Activated naive CD4-positive, alpha-beta T cell treated with anti-CD3 and anti-CD28 coated beads, Interleukin-2, amount 10 ng/mL, durations not matched to agents 7 days and 5 days (primary cell): ENCODE measurements at regions of chr22 and their contacts with region 1.

Region 1: GRCh38 chr22:37472418-37473006 is 13.7 kb downstream of the MFNG start:
- DNase-seq: peak; percentile 65
- H3K4me3 Mint-ChIP-seq: no peak overlapping the region
- H3K27ac Mint-ChIP-seq: no peak overlapping the region
- H3K4me1 Mint-ChIP-seq: no peaks in the 10 kb centered on the region
- H3K27me3 Mint-ChIP-seq: no peaks in the 10 kb centered on the region

Region 2: DNA sequence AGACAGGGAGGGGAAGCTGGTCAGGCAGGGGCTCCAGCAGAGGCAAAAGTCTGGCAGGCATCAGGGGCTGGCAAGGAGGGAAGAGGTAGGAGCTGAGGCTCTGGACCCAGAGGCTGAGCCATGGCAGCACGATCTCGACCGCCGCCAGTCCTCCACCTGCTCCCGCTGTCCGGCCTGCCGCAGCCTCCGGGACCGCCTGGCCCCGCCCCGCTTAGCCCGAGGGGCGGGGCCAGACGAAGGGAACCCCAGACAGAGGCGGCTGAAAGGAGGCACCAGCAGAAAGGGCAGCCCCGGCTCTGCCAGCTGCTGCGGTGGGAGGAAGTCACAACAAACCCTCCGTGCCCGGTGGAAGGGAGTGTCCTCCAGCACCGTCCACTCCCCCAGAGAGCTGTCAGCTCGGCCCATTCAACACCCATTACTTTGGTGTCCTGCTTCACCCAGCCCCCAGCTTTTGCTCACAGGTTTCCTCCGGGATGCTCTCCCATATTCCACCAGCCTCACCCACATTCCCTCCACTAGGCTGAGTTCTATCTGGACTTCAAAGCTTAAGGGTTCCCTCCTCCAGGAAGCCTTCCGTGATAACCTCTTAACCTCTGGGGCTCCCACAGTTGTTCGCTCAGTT is 13.8 kb after region 1 on chr22 and contains the start of gene MFNG:
- CTCF ChIA-PET with region 1: interaction called, 26 read pairs
- DNase-seq: peak; percentile 85
- H3K4me3 Mint-ChIP-seq: peak within 1 kb of the TSS; percentile 89
- H3K27ac Mint-ChIP-seq: peak within 1 kb of the TSS; percentile 93
- H3K4me1 Mint-ChIP-seq: peaks cover 61% of the 10 kb centered on the region
- H3K27me3 Mint-ChIP-seq: peaks cover 4% of the 10 kb centered on the region

Region 3: GRCh38 chr22:37492428-37493344 is 20.2 kb after region 1 on chr22:
- CTCF ChIA-PET with region 1: interaction called, 55 read pairs
- DNase-seq: peak; percentile 79
- H3K4me3 Mint-ChIP-seq: no peak overlapping the region
- H3K27ac Mint-ChIP-seq: no peak overlapping the region
- H3K4me1 Mint-ChIP-seq: peaks cover 40% of the 10 kb centered on the region
- H3K27me3 Mint-ChIP-seq: peaks cover 41% of the 10 kb centered on the region

Region 4: GRCh38 chr22:37498289-37498909 is 25.9 kb after region 1 on chr22:
- CTCF ChIA-PET with region 1: interaction called, 55 read pairs
- DNase-seq: peak; percentile 83
- H3K4me3 Mint-ChIP-seq: no peak overlapping the region
- H3K27ac Mint-ChIP-seq: no peak overlapping the region
- H3K4me1 Mint-ChIP-seq: peaks cover 23% of the 10 kb centered on the region
- H3K27me3 Mint-ChIP-seq: peaks cover 79% of the 10 kb centered on the region

Region 5: DNA sequence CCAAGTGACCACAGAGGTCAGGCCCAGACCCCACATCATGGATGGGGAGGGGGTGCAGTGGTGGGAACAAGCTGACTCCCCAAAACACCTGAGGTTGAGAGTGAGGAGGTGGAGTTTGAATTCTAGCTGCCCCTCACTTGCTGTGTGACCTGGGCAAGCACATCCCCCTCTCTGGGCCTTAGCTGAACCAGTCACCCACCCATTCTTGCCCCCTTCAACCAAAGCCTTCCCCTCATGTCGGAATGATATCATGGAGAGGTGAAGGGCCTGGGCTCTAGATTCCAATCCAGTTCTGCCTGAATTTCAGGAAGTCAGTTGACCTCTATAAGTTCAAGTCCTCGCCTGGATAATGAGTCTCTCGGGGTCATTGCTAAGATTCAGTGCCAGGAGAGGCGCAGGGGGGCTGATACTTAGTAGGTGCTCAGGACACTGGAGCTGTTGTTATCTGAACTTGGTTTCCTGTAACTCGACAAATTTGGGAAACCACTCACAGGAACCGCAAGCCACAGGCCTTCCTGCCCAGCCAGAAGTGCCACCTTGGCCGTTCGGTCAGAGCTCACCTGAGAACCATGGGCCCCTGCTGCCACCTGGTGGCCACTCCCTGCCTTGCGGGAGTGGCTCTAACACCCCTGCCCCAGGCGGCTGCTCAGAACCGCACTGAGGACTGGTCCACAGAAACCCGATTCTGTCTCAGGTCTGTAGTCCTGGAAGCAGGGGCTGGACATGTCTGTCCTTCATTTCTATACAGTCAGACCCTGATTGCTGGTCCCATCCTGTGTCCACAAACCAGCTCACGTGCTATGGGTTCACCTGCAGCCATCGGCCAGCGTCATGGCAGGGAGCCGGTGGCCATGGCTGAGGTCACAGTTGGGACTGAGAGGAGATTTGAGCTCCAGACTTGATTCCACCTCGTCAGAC is 94.7 kb after region 1 on chr22:
- CTCF ChIA-PET with region 1: interaction called, 24 read pairs
- DNase-seq: peak; percentile 95
- H3K4me3 Mint-ChIP-seq: peak overlapping the region; percentile 38
- H3K27ac Mint-ChIP-seq: peak overlapping the region; percentile 81
- H3K4me1 Mint-ChIP-seq: peaks cover 23% of the 10 kb centered on the region
- H3K27me3 Mint-ChIP-seq: peaks cover 100% of the 10 kb centered on the region